ENCODE measurements at regions of chr2 and their contacts with region 1.

Region 1: GRCh38 chr2:47225061-47225859 is 70.2 kb upstream of the STPG4 start:
- DNase-seq: no peak
- H3K4me3 ChIP-seq: no peak overlapping the region
- H3K27ac ChIP-seq: peak overlapping the region in 1 of 4 donors; percentile 3
- H3K4me1 ChIP-seq: peaks cover 20 to 36% (median 27%) of the 10 kb centered on the region in 4 donors
- H3K27me3 ChIP-seq: no peaks in the 10 kb centered on the region
- CTCF ChIP-seq: no peak
- EP300 ChIP-seq: no peak
- POLR2A ChIP-seq: no peak

Region 2: GRCh38 chr2:47155091-47155876 is 70.0 kb before region 1 on chr2 and contains the start of gene STPG4:
- intact Hi-C with region 1: no loop called
- DNase-seq: no peak
- H3K4me3 ChIP-seq: no peak within 1 kb of the TSS
- H3K27ac ChIP-seq: peak within 1 kb of the TSS in 1 of 4 donors; percentile 20
- H3K4me1 ChIP-seq: peaks cover 0 to 6% (median 0%) of the 10 kb centered on the region in 4 donors
- H3K27me3 ChIP-seq: no peaks in the 10 kb centered on the region
- CTCF ChIP-seq: no peak
- EP300 ChIP-seq: no peak
- POLR2A ChIP-seq: no peak
- total RNA-seq, gene STPG4: not detected

Region 3: DNA sequence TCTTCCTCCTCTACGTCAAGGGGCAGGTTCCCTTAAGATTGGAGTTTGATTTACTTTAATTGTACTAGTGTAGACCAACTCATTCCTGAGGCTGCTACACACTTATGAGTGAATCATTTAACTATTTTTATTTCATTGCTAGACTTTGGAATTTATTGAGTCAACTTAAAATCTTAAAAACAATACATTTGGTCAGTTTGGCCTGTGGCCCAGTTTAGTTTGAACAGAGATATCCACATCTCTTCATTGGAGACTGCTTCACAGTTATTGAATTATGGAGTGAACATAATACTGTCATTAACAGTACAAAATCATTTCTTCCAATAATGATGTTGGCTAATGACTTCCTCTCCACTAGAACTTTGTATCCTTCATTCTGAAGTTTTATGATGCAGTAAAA is 35.6 kb before region 1 on chr2:
- intact Hi-C with region 1: loop called (anchors 5 kb)
- DNase-seq: no peak
- H3K4me3 ChIP-seq: no peak overlapping the region
- H3K27ac ChIP-seq: peak overlapping the region in 3 of 4 donors; percentile 71 to 80 (median 72)
- H3K4me1 ChIP-seq: peaks cover 5 to 50% (median 44%) of the 10 kb centered on the region in 4 donors
- H3K27me3 ChIP-seq: no peaks in the 10 kb centered on the region
- CTCF ChIP-seq: no peak
- EP300 ChIP-seq: no peak
- POLR2A ChIP-seq: no peak

Region 4: GRCh38 chr2:47323009-47323821 is 98.0 kb after region 1 on chr2:
- intact Hi-C with region 1: no loop called
- DNase-seq: peak; percentile 94
- H3K4me3 ChIP-seq: no peak overlapping the region
- H3K27ac ChIP-seq: peak overlapping the region in 1 of 4 donors; percentile 21
- H3K4me1 ChIP-seq: peaks cover 4 to 20% (median 10%) of the 10 kb centered on the region in 4 donors
- H3K27me3 ChIP-seq: no peaks in the 10 kb centered on the region
- CTCF ChIP-seq: peak; percentile 98 to 99 (median 98)
- EP300 ChIP-seq: no peak
- POLR2A ChIP-seq: no peak